B cell (primary cell): ENCODE measurements at regions of chr10 and their contacts with region 1.

Region 1: DNA sequence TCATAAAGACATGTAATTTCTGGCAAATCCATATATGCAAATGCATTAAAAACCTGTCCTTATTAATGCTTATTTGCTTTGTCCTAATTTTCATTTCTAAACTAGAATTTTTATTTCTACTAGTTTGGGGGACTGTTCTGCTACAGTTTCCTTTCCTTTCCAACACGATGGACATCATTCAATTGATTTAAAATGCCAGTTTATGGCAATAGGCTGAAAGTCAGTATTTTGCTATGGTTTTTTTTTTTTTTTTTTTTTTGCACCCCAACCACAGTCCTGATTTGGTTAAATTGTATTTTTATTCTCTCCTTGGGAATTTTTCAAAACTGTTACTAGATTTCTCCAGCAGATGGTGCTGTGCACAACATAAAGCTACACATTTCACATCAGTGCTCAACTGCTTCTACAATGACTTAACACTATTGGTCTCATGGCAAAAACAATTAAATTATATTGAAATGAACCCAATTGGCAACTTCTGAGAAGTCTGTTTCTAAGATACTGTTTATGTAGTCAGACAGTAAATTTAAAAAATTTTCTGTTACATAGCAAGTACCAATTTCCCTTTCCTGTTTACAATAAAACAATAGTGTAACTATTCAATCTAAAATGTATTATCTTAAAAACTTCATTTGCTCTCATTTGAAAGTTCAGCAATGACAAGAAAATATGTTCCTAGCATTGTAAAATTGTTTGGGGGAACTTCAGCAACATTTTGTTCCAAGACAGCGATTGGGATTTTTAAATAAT is 193.8 kb upstream of the CCDC6 start:
- DNase-seq: peak; percentile 61
- ATAC-seq: peak; percentile 49
- H3K4me3 ChIP-seq: no peak overlapping the region
- H3K4me3 Mint-ChIP-seq: no peak overlapping the region
- H3K27ac ChIP-seq: no peak overlapping the region
- H3K27ac Mint-ChIP-seq: no peak overlapping the region
- H3K4me1 ChIP-seq: no peaks in the 10 kb centered on the region
- H3K4me1 Mint-ChIP-seq: no peaks in the 10 kb centered on the region
- H3K27me3 ChIP-seq: no peaks in the 10 kb centered on the region
- H3K27me3 Mint-ChIP-seq: peaks cover 4% of the 10 kb centered on the region
- CTCF ChIP-seq: peak; percentile 89

Region 2: DNA sequence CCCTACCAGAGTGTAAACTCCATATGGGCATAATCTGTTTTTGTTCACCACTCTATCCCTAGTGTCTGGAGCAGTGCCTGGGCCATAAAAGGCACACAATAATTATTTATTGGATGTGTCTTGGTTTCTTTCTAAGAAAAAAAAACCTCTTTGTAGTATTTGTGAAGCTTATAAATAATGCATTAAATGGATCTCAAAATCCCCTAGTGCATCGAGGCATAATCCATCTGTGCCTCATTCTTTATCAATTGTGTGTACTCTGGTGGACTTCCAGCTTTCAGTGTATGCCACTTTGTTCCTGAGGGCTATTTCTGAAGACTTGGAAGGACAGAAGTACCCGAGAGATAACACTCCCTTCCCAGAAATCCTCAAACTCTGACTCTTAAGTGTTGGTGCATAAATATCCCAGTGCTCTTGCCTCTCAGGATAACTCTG is 1178.7 kb before region 1 on chr10:
- CTCF ChIA-PET with region 1: no interaction called
- POLR2A ChIA-PET with region 1: no interaction called
- intact Hi-C with region 1: no loop called
- DNase-seq: no peak
- ATAC-seq: no peak
- H3K4me3 ChIP-seq: no peak overlapping the region
- H3K4me3 Mint-ChIP-seq: no peak overlapping the region
- H3K27ac ChIP-seq: no peak overlapping the region
- H3K27ac Mint-ChIP-seq: no peak overlapping the region
- H3K4me1 ChIP-seq: no peaks in the 10 kb centered on the region
- H3K4me1 Mint-ChIP-seq: no peaks in the 10 kb centered on the region
- H3K27me3 ChIP-seq: peaks cover 0 to 3% (median 0%) of the 10 kb centered on the region in 4 experiments
- H3K27me3 Mint-ChIP-seq: no peaks in the 10 kb centered on the region
- CTCF ChIP-seq: no peak

Region 3: DNA sequence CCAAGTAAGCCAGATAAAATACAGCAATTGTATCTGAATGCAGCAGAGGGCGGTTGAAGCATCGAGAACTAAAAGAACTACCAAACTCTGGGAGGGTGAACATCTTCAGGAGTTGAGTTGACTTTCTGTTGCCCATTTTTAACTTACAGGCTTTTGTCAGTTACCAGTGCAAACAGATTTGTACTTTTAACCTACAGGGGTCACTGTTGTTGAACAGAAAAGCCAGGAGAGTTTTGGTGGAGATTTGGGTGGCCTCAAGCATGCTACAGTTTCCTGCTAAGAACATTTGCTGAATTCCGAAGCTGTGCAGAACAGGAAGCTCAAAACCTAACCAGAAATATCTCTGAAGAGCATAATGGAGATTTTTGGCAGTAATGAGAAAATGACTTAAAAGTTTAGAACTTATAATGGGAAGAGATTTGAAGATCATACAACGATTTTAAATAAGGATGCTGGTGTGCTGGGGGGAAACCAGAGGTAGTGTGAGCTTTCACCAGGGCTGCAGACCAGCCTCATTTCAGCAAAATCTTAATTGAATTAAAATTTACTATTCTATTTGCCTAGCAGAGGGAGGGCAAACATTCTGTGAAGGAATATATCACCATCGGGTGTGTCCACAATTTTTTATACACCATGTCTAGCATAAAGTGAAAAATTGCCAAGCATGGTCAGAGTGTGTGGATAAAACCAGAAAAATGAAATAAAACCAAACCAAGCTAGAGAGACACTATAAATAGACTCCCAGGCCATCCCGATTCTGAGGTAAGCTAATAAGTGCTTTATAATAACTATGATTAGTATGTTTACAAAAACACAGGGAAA is 14.8 kb after region 1 on chr10:
- CTCF ChIA-PET with region 1: interaction called, 26 read pairs
- POLR2A ChIA-PET with region 1: no interaction called
- intact Hi-C with region 1: no loop called
- DNase-seq: peak; percentile 61
- ATAC-seq: peak; percentile 53
- H3K4me3 ChIP-seq: no peak overlapping the region
- H3K4me3 Mint-ChIP-seq: no peak overlapping the region
- H3K27ac ChIP-seq: no peak overlapping the region
- H3K27ac Mint-ChIP-seq: no peak overlapping the region
- H3K4me1 ChIP-seq: peaks cover 4 to 6% of the 10 kb centered on the region in 2 donors
- H3K4me1 Mint-ChIP-seq: no peaks in the 10 kb centered on the region
- H3K27me3 ChIP-seq: no peaks in the 10 kb centered on the region
- H3K27me3 Mint-ChIP-seq: no peaks in the 10 kb centered on the region
- CTCF ChIP-seq: peak; percentile 68

Region 4: DNA sequence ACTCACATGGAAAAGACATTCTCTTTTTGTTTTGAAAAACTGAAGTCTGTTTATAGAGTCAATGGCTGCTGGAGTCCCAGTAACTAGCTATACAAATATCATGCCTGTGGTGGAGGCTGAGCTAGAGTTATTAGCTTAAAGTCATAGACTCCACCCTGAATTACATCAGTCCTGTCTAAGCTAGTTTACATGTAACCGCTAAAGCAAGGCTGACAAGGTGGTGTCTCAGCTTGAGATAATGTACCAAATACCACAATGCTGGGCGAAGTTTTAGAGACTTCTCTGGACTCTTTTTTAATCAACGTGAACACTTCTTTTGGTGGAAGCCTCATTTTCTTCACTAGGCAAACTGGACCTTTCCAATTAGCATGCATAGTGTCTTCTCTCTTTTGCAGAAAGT is 70.1 kb after region 1 on chr10:
- CTCF ChIA-PET with region 1: no interaction called
- POLR2A ChIA-PET with region 1: no interaction called
- intact Hi-C with region 1: no loop called
- DNase-seq: no peak
- ATAC-seq: no peak
- H3K4me3 ChIP-seq: no peak overlapping the region
- H3K4me3 Mint-ChIP-seq: no peak overlapping the region
- H3K27ac ChIP-seq: no peak overlapping the region
- H3K27ac Mint-ChIP-seq: no peak overlapping the region
- H3K4me1 ChIP-seq: no peaks in the 10 kb centered on the region
- H3K4me1 Mint-ChIP-seq: no peaks in the 10 kb centered on the region
- H3K27me3 ChIP-seq: no peaks in the 10 kb centered on the region
- H3K27me3 Mint-ChIP-seq: no peaks in the 10 kb centered on the region
- CTCF ChIP-seq: no peak

Region 5: DNA sequence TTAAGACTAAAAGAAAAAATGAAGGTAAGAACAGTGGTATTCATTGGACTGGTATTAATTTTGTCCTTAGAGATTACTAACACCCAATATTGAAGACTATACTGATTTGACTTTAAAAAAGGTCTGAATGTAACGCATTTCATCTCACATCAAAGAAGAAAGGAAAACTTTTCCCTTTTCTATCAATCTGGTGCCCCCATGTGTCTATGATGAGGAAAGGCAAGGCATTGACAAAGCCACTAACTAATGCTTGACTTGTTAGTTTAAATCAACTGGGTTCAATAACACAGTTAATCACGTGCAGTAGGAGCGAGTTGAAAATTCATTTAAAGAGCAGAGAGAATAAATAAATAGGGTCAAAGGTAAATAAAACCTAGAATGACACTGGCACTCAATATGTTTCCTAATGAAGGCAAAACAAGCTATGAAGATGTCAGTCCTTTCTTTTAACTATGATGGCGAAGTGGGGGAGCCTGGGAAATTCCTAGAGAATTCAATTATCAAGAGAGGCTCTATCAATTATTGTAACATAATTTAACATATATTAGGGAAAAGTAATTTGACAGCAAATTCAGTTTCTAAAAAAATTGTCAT is 108.6 kb after region 1 on chr10:
- CTCF ChIA-PET with region 1: interaction called, 48 read pairs
- POLR2A ChIA-PET with region 1: no interaction called
- intact Hi-C with region 1: no loop called
- DNase-seq: peak; percentile 36
- ATAC-seq: no peak
- H3K4me3 ChIP-seq: no peak overlapping the region
- H3K4me3 Mint-ChIP-seq: no peak overlapping the region
- H3K27ac ChIP-seq: no peak overlapping the region
- H3K27ac Mint-ChIP-seq: no peak overlapping the region
- H3K4me1 ChIP-seq: peaks cover 14 to 26% of the 10 kb centered on the region in 2 donors
- H3K4me1 Mint-ChIP-seq: peaks cover 37% of the 10 kb centered on the region
- H3K27me3 ChIP-seq: no peaks in the 10 kb centered on the region
- H3K27me3 Mint-ChIP-seq: no peaks in the 10 kb centered on the region
- CTCF ChIP-seq: peak; percentile 67

Region 6: GRCh38 chr10:60367431-60367830 is 267.3 kb after region 1 on chr10:
- CTCF ChIA-PET with region 1: no interaction called
- POLR2A ChIA-PET with region 1: no interaction called
- intact Hi-C with region 1: no loop called
- DNase-seq: no peak
- ATAC-seq: no peak
- H3K4me3 ChIP-seq: no peak overlapping the region
- H3K4me3 Mint-ChIP-seq: no peak overlapping the region
- H3K27ac ChIP-seq: no peak overlapping the region
- H3K27ac Mint-ChIP-seq: no peak overlapping the region
- H3K4me1 ChIP-seq: peaks cover 0 to 6% of the 10 kb centered on the region in 2 donors
- H3K4me1 Mint-ChIP-seq: peaks cover 10% of the 10 kb centered on the region
- H3K27me3 ChIP-seq: no peaks in the 10 kb centered on the region
- H3K27me3 Mint-ChIP-seq: peaks cover 7% of the 10 kb centered on the region
- CTCF ChIP-seq: no peak

Region 7: DNA sequence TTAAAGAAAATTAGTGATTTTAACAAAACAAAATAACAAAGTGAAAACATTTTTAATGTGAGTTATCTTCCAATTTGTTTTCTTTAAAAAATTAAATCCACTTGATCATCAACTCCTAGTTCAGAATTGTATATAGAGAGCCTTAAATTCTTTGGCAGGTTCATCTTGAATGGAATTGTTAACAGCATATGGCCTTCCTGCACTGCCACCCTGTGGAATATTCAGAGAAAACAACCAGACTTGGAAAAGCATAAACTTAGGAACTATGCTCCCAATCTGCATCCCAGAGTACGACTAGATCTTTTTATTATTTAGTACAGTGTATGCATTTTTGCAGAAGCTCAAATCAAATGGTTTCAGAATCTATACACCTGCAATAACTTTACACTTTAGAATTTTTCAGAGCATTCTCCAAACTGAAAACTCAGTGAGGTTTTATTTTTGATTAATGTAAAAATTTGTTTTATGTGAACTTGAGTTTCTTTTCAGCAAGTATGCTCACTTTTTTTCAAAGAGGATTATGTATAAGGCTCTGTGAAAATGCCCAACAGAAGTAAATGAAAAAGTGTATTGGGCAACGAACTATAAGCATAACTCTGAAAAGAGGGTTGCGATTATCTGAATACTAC is 334.4 kb after region 1 on chr10:
- CTCF ChIA-PET with region 1: interaction called, 45 read pairs
- POLR2A ChIA-PET with region 1: no interaction called
- intact Hi-C with region 1: loop called (anchors 1 kb)
- DNase-seq: peak; percentile 61
- ATAC-seq: peak; percentile 56
- H3K4me3 ChIP-seq: no peak overlapping the region
- H3K4me3 Mint-ChIP-seq: no peak overlapping the region
- H3K27ac ChIP-seq: no peak overlapping the region
- H3K27ac Mint-ChIP-seq: no peak overlapping the region
- H3K4me1 ChIP-seq: no peaks in the 10 kb centered on the region
- H3K4me1 Mint-ChIP-seq: peaks cover 7% of the 10 kb centered on the region
- H3K27me3 ChIP-seq: no peaks in the 10 kb centered on the region
- H3K27me3 Mint-ChIP-seq: no peaks in the 10 kb centered on the region
- CTCF ChIP-seq: peak; percentile 77

Region 8: DNA sequence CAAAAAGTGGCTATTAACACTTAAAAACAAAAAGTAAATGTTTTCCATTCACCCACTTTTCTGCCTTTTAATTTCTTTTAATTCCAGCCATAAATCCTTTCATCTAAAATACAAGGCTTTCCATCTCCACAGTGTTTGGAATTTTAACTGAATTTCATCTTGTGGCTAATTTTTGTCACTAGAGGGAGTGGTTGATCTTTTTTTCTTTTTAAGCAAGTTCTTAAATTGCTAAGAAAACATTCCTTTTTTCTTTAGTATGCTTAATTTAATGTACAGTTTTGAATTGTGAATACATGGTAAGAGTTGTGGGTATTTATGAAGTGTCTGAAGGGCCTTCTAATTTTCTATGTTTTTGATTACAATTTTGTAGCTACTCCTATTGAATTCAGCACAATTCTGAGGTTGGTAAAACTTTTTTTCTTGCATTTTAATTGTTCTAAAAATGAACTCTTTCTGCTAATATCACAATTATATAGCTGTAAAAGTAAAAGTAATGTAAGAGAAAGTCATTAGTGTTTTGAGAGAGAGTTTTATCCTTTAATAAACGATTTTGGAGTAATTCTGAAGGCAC is 344.4 kb after region 1 on chr10:
- CTCF ChIA-PET with region 1: interaction called, 13 read pairs
- POLR2A ChIA-PET with region 1: no interaction called
- intact Hi-C with region 1: no loop called
- DNase-seq: no peak
- ATAC-seq: no peak
- H3K4me3 ChIP-seq: no peak overlapping the region
- H3K4me3 Mint-ChIP-seq: no peak overlapping the region
- H3K27ac ChIP-seq: no peak overlapping the region
- H3K27ac Mint-ChIP-seq: no peak overlapping the region
- H3K4me1 ChIP-seq: peaks cover 7 to 8% of the 10 kb centered on the region in 2 donors
- H3K4me1 Mint-ChIP-seq: peaks cover 8% of the 10 kb centered on the region
- H3K27me3 ChIP-seq: no peaks in the 10 kb centered on the region
- H3K27me3 Mint-ChIP-seq: no peaks in the 10 kb centered on the region
- CTCF ChIP-seq: peak; percentile 27

Region 9: DNA sequence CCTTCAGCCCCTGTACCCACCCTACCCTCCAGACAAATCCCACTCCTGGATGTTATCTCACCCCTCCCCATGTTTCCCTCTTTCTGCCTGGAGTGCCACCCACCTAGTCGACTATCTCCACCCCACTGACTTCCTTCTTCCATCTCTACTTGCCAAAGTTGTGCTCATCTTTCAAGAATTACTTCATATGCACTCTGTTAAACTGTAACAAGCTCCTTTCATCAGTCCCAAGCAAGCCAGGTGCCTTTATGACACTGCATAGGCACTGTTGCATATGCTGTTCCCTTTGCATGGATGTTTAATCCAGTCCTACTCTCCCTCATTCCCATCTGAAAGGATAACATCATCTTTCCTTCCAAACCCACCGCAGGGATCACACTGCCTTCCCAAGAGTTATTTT is 669.2 kb after region 1 on chr10:
- CTCF ChIA-PET with region 1: interaction called, 3 read pairs
- POLR2A ChIA-PET with region 1: no interaction called
- intact Hi-C with region 1: loop called (anchors 2 kb)
- DNase-seq: no peak
- ATAC-seq: no peak
- H3K4me3 ChIP-seq: no peak overlapping the region
- H3K4me3 Mint-ChIP-seq: no peak overlapping the region
- H3K27ac ChIP-seq: no peak overlapping the region
- H3K27ac Mint-ChIP-seq: no peak overlapping the region
- H3K4me1 ChIP-seq: no peaks in the 10 kb centered on the region
- H3K4me1 Mint-ChIP-seq: peaks cover 2% of the 10 kb centered on the region
- H3K27me3 ChIP-seq: no peaks in the 10 kb centered on the region
- H3K27me3 Mint-ChIP-seq: no peaks in the 10 kb centered on the region
- CTCF ChIP-seq: no peak

Region 10: GRCh38 chr10:60964257-60965235 is 864.4 kb after region 1 on chr10:
- CTCF ChIA-PET with region 1: no interaction called
- POLR2A ChIA-PET with region 1: no interaction called
- intact Hi-C with region 1: loop called (anchors 10 kb)
- DNase-seq: peak; percentile 67
- ATAC-seq: peak; percentile 58
- H3K4me3 ChIP-seq: no peak overlapping the region
- H3K4me3 Mint-ChIP-seq: no peak overlapping the region
- H3K27ac ChIP-seq: no peak overlapping the region
- H3K27ac Mint-ChIP-seq: no peak overlapping the region
- H3K4me1 ChIP-seq: peaks cover 12 to 13% of the 10 kb centered on the region in 2 donors
- H3K4me1 Mint-ChIP-seq: peaks cover 20% of the 10 kb centered on the region
- H3K27me3 ChIP-seq: no peaks in the 10 kb centered on the region
- H3K27me3 Mint-ChIP-seq: peaks cover 5% of the 10 kb centered on the region
- CTCF ChIP-seq: peak; percentile 93

Region 11: GRCh38 chr10:61822781-61823230 is 1722.6 kb after region 1 on chr10:
- CTCF ChIA-PET with region 1: no interaction called
- POLR2A ChIA-PET with region 1: no interaction called
- intact Hi-C with region 1: no loop called
- DNase-seq: no peak
- ATAC-seq: no peak
- H3K4me3 ChIP-seq: no peak overlapping the region
- H3K4me3 Mint-ChIP-seq: no peak overlapping the region
- H3K27ac ChIP-seq: no peak overlapping the region
- H3K27ac Mint-ChIP-seq: no peak overlapping the region
- H3K4me1 ChIP-seq: no peaks in the 10 kb centered on the region
- H3K4me1 Mint-ChIP-seq: no peaks in the 10 kb centered on the region
- H3K27me3 ChIP-seq: no peaks in the 10 kb centered on the region
- H3K27me3 Mint-ChIP-seq: no peaks in the 10 kb centered on the region
- CTCF ChIP-seq: no peak